Activated CD4-positive, alpha-beta T cell treated with anti-CD3 and anti-CD28 coated beads for 36 hours (primary cell): ENCODE measurements at regions of chr2 and their contacts with region 1.

Region 1: GRCh38 chr2:75710577-75711253 is at the start of gene GCFC2:
- DNase-seq: peak; percentile 90
- ATAC-seq: peak; percentile 95
- H3K4me3 Mint-ChIP-seq: peak within 1 kb of the TSS; percentile 73
- H3K27ac Mint-ChIP-seq: peak within 1 kb of the TSS; percentile 98
- H3K4me1 Mint-ChIP-seq: peaks cover 26% of the 10 kb centered on the region
- H3K27me3 Mint-ChIP-seq: peaks cover 2% of the 10 kb centered on the region
- total RNA-seq, gene GCFC2: 37.6 to 41.1 TPM

Region 2: DNA sequence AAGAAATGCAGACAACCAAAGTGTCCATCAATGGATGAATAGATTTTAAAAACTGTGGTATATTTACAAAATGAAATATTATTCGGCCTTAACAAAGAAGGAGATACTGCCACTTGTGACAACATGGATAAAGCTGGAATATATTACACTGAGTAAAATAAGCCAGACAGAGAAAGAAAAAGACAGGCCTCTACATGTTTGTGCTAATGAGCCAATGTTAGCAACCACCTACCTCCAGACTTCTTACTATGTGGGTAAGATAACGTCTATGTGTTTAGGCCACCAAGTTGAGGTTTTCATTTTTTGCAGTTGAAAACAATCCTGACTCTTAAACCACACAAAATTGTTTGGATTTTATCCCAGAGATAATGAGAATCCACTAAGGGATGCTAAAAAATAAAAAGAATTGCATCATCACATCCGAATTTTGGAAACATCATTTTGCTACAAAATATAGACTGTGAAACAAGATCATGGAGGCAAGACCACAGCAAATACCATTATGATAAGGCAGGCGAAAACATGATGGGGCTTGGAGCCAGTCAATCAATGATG is 197.0 kb before region 1 on chr2:
- CTCF ChIA-PET with region 1: no interaction called
- POLR2A ChIA-PET with region 1: no interaction called
- intact Hi-C with region 1: no loop called
- DNase-seq: no peak
- ATAC-seq: no peak
- H3K4me3 Mint-ChIP-seq: no peak overlapping the region
- H3K27ac Mint-ChIP-seq: no peak overlapping the region
- H3K4me1 Mint-ChIP-seq: no peaks in the 10 kb centered on the region
- H3K27me3 Mint-ChIP-seq: peaks cover 15% of the 10 kb centered on the region

Region 3: DNA sequence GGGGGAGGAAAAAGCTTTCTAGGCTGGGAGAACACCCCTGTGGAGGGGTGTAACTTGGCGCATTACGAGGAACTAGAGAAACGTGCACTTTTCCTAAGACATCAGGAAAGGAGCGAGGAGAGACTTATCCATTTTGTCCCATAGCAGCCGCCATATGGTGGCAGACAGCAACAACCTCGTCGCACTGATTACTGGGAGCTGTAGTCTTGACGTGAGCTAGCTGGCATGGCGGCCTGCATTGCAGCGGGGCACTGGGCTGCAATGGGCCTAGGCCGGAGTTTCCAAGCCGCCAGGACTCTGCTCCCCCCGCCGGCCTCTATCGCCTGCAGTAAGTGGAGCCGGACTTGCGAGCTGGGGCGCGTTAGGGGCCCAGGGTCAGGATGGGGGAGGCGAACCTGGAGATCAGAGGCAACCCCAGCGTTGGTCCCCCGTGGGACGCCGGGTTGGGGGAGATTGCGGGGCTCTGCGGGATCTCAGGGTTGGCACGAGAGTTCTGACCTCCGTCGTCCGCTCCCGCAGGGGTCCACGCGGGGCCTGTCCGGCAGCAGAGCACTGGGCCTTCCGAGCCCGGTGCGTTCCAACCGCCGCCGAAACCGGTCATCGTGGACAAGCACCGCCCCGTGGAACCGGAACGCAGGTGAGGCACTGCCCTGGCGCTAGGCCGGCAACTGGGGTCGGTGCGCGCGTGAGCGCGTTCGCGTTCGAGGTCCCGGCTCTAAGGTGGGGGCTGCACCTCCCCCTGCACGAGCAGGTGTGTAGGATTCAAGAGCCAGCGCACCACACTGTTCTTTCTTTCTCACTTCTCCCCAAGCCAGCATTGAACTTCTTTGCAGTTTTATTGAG is 63.9 kb before region 1 on chr2 and contains the start of gene MRPL19:
- CTCF ChIA-PET with region 1: interaction called, 6 read pairs
- POLR2A ChIA-PET with region 1: interaction called, 6 read pairs
- intact Hi-C with region 1: loop called (anchors 1 to 2 kb)
- DNase-seq: peak; percentile 86
- ATAC-seq: peak; percentile 99
- H3K4me3 Mint-ChIP-seq: peak within 1 kb of the TSS; percentile 88
- H3K27ac Mint-ChIP-seq: peak within 1 kb of the TSS; percentile 96
- H3K4me1 Mint-ChIP-seq: peaks cover 32% of the 10 kb centered on the region
- H3K27me3 Mint-ChIP-seq: no peaks in the 10 kb centered on the region
- total RNA-seq, gene MRPL19: 45.2 to 72.4 TPM